Activated CD4-positive, alpha-beta T cell treated with anti-CD3 and anti-CD28 coated beads for 36 hours (primary cell): ENCODE measurements at regions of chr17 and their contacts with region 1.

Region 1: DNA sequence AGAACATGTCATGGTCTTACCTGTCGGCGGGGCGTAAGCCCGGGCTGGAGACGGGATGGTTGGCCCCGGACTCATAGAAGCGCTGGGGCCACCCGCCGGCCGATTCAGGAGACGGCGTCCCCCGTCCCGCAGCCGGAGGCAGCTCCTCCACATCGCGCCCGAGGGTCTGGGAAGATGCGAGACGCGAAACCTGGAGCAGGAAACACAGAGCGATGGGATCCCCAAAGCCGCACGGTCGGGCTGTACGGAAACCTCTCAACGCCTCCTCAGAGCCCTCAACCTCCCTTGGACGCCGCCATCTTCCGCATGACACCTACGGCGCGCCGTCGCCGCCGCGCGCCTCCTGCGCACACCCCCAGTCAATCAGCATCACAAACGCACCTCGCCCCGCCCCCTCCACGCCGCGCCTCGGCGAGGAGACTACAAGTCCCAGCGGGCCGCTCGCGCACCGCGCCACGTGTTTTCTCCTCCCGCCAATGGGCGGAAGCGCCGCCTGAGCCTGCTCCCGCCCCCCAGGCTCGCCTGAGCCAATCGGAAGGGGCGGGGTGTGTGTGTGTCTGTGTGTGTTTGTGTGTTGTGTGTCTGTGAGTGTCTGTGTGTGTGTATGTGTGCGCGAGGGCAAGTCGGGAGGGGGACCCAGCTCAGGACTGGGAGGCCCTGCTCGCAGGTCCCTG is at the starts of genes ATPAF2 and GID4:
- DNase-seq: peak; percentile 100
- ATAC-seq: peak; percentile 91
- H3K4me3 Mint-ChIP-seq: peak within 1 kb of the TSS; percentile 91
- H3K27ac Mint-ChIP-seq: peak within 1 kb of the TSS; percentile 92
- H3K4me1 Mint-ChIP-seq: peaks cover 49% of the 10 kb centered on the region
- H3K27me3 Mint-ChIP-seq: no peaks in the 10 kb centered on the region
- total RNA-seq, gene ATPAF2: 32.9 to 40.3 TPM
- total RNA-seq, gene GID4: 6.7 to 7.7 TPM

Region 2: DNA sequence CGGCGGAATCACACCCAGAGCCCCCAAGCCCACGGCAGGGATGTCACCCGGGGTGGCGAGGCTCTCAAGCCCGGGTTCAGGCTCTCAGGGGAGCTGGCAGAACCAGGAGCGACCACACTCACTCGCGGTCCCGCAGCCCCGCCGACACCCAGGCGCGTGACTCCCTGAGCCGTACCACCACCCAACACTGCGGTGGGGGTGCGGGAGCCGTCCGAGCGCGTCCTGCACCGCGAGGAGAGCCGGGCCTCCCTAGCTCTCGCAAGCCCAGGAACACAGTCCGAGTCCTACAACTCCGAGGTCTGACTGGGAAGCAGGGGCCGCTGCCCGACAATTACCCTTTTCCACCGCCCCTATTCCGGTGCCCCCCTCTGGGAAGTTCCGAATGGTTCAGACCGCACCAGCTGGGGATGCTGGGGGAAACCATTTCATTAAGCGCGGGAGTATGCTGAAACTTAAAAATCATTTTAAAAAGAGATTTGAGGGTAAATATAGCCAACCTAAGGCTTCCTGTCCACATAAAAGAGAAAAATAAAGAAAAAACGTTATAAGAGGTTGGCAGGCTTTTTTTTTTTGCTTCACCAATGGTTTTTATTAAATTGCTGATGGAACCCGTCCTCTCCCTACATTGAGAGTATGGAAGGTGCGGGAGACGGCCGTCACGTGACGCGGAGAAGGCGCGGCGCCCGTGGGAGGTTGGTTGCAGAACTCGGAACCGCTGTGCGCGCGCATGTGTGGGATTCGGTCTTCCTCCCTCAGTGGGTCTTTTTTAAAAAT is 801.8 kb before region 1 on chr17 and contains the start of gene FLCN:
- CTCF ChIA-PET with region 1: no interaction called
- POLR2A ChIA-PET with region 1: no interaction called
- intact Hi-C with region 1: loop called in 1 of 2 experiments (anchors 1 kb)
- DNase-seq: peak; percentile 93
- ATAC-seq: peak; percentile 90
- H3K4me3 Mint-ChIP-seq: peak within 1 kb of the TSS; percentile 81
- H3K27ac Mint-ChIP-seq: peak within 1 kb of the TSS; percentile 98
- H3K4me1 Mint-ChIP-seq: peaks cover 31% of the 10 kb centered on the region
- H3K27me3 Mint-ChIP-seq: no peaks in the 10 kb centered on the region
- total RNA-seq, gene FLCN: 12.3 to 18.8 TPM

Region 3: DNA sequence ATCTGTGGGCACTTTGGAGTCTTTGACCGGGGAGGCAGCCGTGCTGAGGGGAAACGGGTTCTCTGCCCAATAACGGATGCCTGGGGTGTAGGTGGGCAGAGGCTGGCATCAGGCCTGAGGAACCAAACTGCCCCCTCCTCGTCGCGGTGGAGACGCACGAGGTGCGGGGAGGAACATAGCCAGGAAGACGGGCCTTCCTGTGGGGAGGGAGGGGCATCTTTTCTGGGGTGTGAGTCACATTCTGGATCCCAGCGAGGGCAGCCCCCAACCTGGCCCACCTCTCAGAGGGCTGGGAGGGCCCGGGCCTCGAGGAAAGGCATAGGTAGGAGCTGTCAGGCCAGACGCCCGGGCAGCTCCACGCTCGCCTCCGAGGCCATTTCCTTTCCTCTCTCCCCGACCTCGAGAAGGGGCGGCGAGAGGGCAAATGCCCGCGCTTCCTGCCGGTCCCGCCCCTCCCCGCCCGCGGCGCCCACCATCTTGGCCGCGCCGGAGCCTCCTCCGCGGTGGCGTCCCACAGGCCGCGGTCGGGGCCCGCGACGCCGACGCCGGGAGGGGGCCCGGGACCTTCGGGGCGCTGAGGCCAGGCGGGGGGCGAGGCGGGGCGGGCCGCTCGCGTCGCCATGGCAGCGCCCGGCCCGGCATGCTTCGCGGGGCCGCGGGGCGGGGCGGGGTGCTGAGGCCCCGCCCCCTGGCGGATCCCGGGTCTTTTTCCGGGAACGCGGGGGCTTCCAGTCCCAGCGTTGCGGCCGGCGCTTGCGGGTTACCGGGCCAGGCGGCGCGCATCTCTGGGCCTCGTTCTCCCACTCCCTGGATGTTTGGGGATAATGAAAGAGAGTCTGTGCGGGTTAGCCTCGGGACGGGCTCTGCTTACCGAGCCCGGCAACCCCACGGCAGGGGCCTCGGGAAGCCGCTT is 344.6 kb before region 1 on chr17:
- CTCF ChIA-PET with region 1: no interaction called
- POLR2A ChIA-PET with region 1: no interaction called
- intact Hi-C with region 1: loop called in 1 of 2 experiments (anchors 2 kb)
- DNase-seq: peak; percentile 79
- ATAC-seq: peak; percentile 69
- H3K4me3 Mint-ChIP-seq: peak overlapping the region; percentile 81
- H3K27ac Mint-ChIP-seq: peak overlapping the region; percentile 98
- H3K4me1 Mint-ChIP-seq: peaks cover 66% of the 10 kb centered on the region
- H3K27me3 Mint-ChIP-seq: no peaks in the 10 kb centered on the region

Region 4: DNA sequence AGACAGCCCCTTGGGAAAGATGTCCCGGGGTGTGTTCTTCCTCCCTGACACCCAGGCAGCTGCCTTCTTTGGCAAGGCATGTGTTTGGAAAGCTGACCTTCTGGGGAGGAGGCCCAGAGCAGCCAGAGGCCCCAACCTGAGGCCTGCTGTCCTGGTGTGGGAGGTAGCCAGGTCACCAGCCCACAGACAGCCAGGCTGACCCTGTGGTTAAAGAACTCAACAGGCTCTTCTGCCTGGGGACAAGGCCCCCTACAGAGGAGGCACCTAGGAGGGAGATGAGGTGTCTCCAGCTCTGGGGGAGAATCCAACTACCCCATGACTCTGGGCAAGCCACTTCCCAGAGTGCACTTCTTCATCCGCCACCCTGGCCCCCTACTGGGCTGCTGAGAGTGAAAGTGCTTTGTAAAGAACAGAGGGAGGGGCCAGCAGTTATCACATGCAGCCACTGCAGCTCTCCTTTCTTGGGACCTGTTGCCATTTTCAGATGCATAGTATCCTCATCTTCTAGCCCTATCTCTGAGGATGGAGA is 189.1 kb before region 1 on chr17:
- CTCF ChIA-PET with region 1: no interaction called
- POLR2A ChIA-PET with region 1: interaction called, 4 read pairs
- intact Hi-C with region 1: loop called in 1 of 2 experiments (anchors 1 kb)
- DNase-seq: peak; percentile 90
- ATAC-seq: peak; percentile 64
- H3K4me3 Mint-ChIP-seq: peak overlapping the region; percentile 34
- H3K27ac Mint-ChIP-seq: peak overlapping the region; percentile 95
- H3K4me1 Mint-ChIP-seq: peaks cover 72% of the 10 kb centered on the region
- H3K27me3 Mint-ChIP-seq: no peaks in the 10 kb centered on the region

Region 5: GRCh38 chr17:17877529-17878358 is 161.3 kb before region 1 on chr17:
- CTCF ChIA-PET with region 1: no interaction called
- POLR2A ChIA-PET with region 1: no interaction called
- intact Hi-C with region 1: no loop called
- DNase-seq: no peak
- ATAC-seq: no peak
- H3K4me3 Mint-ChIP-seq: no peak overlapping the region
- H3K27ac Mint-ChIP-seq: no peak overlapping the region
- H3K4me1 Mint-ChIP-seq: no peaks in the 10 kb centered on the region
- H3K27me3 Mint-ChIP-seq: no peaks in the 10 kb centered on the region

Region 6: DNA sequence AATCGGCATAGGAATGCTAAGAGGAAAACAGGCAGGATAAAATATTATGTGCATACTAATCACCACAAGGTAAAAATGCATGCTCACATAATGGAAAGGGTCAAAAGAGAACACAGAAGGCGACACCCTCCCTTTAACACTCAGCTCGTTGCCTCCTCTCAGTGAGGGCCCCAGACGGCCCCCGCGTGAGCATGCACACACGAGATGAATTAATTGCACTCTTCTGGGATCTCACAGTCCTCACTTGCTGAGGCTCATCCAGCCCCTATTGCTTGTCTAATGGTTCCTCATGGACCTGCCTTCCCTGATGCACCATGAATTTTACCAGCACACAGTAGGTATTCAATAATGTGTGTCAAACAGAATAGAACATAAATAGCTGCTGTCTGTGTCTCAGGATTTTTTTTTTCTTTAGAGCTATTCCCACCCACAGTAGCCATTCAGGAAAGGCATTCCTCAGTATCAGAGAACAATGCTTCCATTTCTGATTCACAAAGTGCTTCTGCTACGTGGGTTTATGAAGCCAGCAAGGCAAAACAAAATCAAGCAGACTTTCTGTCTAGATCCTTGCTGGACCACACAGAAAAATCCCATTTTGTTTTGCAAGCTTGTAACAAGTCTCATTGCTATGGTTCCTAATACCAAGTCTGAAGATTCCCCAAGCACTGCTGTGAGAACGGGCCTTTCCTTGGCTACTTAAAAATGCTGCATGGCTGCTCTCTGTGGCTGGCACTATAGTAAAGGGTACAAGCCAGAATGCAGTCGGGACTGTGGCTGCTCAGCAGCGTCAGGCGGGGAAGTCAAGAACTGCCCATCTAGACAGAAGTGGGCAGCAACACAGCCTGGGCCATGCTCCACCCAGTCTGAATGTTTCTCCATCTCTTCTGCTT is 110.4 kb before region 1 on chr17:
- CTCF ChIA-PET with region 1: no interaction called
- POLR2A ChIA-PET with region 1: no interaction called
- intact Hi-C with region 1: no loop called
- DNase-seq: no peak
- ATAC-seq: no peak
- H3K4me3 Mint-ChIP-seq: no peak overlapping the region
- H3K27ac Mint-ChIP-seq: no peak overlapping the region
- H3K4me1 Mint-ChIP-seq: peaks cover 2% of the 10 kb centered on the region
- H3K27me3 Mint-ChIP-seq: no peaks in the 10 kb centered on the region

Region 7: DNA sequence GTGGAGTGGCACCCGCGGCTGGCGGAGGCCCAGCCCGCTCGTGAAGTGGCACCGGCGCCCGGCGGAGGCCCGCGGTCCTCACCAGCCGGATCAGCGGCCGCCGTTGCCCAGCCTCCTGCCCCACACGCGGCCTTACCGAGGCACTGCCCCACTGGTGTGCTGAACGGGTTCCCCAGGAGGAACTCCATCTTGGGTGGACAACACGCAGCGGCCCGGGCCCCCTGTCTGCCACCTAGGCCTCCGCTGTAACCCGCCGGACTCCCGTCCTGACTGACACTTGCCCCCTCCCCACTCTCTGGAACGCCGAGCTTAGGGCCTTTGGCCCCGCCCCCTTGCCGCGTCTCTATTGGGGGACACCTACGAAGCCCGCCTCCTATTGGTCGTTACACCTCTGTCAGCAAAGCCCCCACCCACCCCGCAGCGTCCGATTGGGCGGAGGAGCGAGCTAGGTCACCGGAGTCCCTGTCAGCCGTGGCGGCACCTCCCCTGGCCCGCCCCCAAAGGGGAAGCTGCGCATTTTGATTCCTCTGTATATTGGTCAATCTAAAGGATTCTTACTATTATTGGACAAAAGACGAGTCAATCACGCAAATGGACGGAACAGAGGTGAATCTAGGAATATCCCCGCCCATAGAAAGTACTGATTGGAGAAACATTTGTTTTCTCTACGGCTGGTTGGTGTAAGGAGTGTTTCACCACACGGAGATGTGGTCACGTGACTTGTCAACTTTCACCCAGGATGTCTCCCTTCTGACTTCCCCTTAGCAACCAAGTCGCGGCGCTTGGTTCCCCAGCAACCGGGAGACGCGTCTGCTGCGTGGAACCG is 66.7 kb before region 1 on chr17 and contains the starts of genes DRC3 and TOM1L2:
- CTCF ChIA-PET with region 1: interaction called, 4 read pairs
- POLR2A ChIA-PET with region 1: no interaction called
- intact Hi-C with region 1: loop called (anchors 1 kb)
- DNase-seq: peak; percentile 100
- ATAC-seq: peak; percentile 97
- H3K4me3 Mint-ChIP-seq: peak within 1 kb of the TSS; percentile 86
- H3K27ac Mint-ChIP-seq: peak within 1 kb of the TSS; percentile 76
- H3K4me1 Mint-ChIP-seq: peaks cover 37% of the 10 kb centered on the region
- H3K27me3 Mint-ChIP-seq: no peaks in the 10 kb centered on the region
- total RNA-seq, gene DRC3: 0.11 to 0.18 TPM
- total RNA-seq, gene TOM1L2: 11.3 to 11.9 TPM

Region 8: DNA sequence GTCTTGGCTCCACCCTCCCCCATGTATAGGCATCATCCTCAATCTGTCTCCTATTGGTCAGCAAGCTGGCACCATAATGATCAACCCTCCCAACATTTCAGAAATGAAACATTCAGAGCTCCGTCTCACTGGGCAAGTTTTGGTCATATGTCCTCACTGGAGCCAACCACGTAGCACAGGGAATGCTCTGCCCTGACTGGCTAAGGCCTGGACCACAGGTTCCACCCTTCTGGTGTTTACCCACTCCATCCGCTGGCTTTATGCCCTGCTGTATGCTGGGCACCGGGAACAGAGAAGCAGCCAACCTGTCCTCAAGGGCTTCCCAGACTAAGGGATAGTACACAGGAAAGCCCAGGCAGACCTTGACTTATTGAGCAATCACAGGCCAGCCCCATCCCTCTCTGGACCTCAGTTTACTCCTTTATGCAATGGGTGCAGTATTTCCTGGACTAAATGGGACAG is 90.1 kb after region 1 on chr17:
- CTCF ChIA-PET with region 1: no interaction called
- POLR2A ChIA-PET with region 1: no interaction called
- intact Hi-C with region 1: no loop called
- DNase-seq: no peak
- ATAC-seq: peak; percentile 42
- H3K4me3 Mint-ChIP-seq: no peak overlapping the region
- H3K27ac Mint-ChIP-seq: no peak overlapping the region
- H3K4me1 Mint-ChIP-seq: no peaks in the 10 kb centered on the region
- H3K27me3 Mint-ChIP-seq: no peaks in the 10 kb centered on the region

Region 9: GRCh38 chr17:18260332-18261144 is 221.5 kb after region 1 on chr17 and contains the start of gene MIEF2:
- CTCF ChIA-PET with region 1: no interaction called
- POLR2A ChIA-PET with region 1: no interaction called
- intact Hi-C with region 1: loop called in 1 of 2 experiments (anchors 2 kb)
- DNase-seq: peak; percentile 96
- ATAC-seq: peak; percentile 92
- H3K4me3 Mint-ChIP-seq: peak within 1 kb of the TSS; percentile 76
- H3K27ac Mint-ChIP-seq: peak within 1 kb of the TSS; percentile 80
- H3K4me1 Mint-ChIP-seq: peaks cover 42% of the 10 kb centered on the region
- H3K27me3 Mint-ChIP-seq: no peaks in the 10 kb centered on the region
- total RNA-seq, gene MIEF2: 3.3 to 5.2 TPM